Heart right ventricle (tissue), 16 donors: ENCODE measurements at regions of chr20 and their contacts with region 1.

Region 1: DNA sequence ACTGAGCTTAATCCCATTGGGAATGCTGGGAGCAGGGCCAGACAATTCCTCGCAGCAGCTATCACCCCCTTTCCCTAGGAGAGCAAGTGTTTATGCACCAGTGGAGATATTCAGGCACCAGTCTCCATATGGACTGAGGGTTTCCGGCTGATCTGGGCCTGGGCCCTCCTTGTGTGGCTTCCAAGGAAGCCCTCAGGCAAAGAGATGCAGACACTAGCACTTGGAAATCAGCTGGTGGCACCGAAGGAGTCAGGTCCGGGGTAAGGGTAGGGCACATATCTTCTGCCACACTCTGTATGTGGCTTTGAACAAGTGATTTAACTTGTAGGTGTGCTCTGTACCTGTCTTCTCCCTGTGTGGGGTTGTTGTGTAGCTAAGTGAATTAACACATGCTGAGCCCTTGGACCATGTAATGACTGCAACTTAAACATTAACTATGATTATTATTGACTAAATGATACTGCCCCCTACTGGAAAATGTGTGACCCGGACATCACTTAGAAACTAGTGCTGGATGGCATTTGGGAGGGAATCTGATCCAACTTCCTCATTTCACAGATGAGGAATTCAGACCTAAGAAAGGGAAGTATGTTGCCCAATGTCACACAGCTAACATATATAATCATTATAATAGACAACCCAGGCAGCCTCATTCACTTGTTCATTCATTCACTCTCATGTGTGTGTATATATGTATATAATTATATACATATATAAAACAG is 19.3 kb upstream of the WFDC2 start:
- DNase-seq: no peak
- ATAC-seq: peak in 4 of 8 donors; percentile 25 to 52 (median 35)
- H3K4me3 ChIP-seq: no peak overlapping the region
- H3K27ac ChIP-seq: peak overlapping the region in 2 of 10 donors; percentile 13 to 25
- H3K4me1 ChIP-seq: no peaks in the 10 kb centered on the region
- H3K27me3 ChIP-seq: peaks cover 0 to 11% (median 0%) of the 10 kb centered on the region in 7 donors
- CTCF ChIP-seq: peak; percentile 34 to 70 (median 60)

Region 2: GRCh38 chr20:45322952-45323383 is 127.3 kb before region 1 on chr20:
- intact Hi-C with region 1: loop called in 4 of 10 experiments (anchors 5 kb)
- DNase-seq: peak in 1 of 2 donors; percentile 62
- ATAC-seq: peak; percentile 68 to 85 (median 80)
- H3K4me3 ChIP-seq: no peak overlapping the region
- H3K27ac ChIP-seq: no peak overlapping the region
- H3K4me1 ChIP-seq: peaks cover 0 to 15% (median 0%) of the 10 kb centered on the region in 9 donors
- H3K27me3 ChIP-seq: peaks cover 0 to 3% (median 0%) of the 10 kb centered on the region in 7 donors
- CTCF ChIP-seq: peak in 8 of 9 donors; percentile 12 to 63 (median 48)

Region 3: GRCh38 chr20:45765980-45766379 is 315.7 kb after region 1 on chr20:
- intact Hi-C with region 1: loop called in 7 of 10 experiments (anchors 5 to 10 kb)
- DNase-seq: no peak
- ATAC-seq: no peak
- H3K4me3 ChIP-seq: no peak overlapping the region
- H3K27ac ChIP-seq: no peak overlapping the region
- H3K4me1 ChIP-seq: peaks cover 0 to 4% (median 3%) of the 10 kb centered on the region in 9 donors
- H3K27me3 ChIP-seq: no peaks in the 10 kb centered on the region
- CTCF ChIP-seq: no peak